ENCODE measurements at regions of chr12 and their contacts with region 1.

Region 1: GRCh38 chr12:63068857-63069442 is 82.1 kb downstream of the AVPR1A start:
- H3K4me3 ChIP-seq: no peak overlapping the region
- H3K27ac ChIP-seq: no peak overlapping the region
- H3K4me1 ChIP-seq: no peaks in the 10 kb centered on the region
- CTCF ChIP-seq: peak; percentile 38; the same call in 1 of the 2 replicates

Region 2: GRCh38 chr12:62435303-62436163 is 633.4 kb before region 1 on chr12:
- CTCF ChIA-PET with region 1: interaction called, 26 read pairs
- POLR2A ChIA-PET with region 1: no interaction called
- H3K4me3 ChIP-seq: peak overlapping the region; percentile 27
- H3K27ac ChIP-seq: no peak overlapping the region
- H3K4me1 ChIP-seq: no peaks in the 10 kb centered on the region
- CTCF ChIP-seq: peak; percentile 83; the same call in 1 of the 2 replicates

Region 3: DNA sequence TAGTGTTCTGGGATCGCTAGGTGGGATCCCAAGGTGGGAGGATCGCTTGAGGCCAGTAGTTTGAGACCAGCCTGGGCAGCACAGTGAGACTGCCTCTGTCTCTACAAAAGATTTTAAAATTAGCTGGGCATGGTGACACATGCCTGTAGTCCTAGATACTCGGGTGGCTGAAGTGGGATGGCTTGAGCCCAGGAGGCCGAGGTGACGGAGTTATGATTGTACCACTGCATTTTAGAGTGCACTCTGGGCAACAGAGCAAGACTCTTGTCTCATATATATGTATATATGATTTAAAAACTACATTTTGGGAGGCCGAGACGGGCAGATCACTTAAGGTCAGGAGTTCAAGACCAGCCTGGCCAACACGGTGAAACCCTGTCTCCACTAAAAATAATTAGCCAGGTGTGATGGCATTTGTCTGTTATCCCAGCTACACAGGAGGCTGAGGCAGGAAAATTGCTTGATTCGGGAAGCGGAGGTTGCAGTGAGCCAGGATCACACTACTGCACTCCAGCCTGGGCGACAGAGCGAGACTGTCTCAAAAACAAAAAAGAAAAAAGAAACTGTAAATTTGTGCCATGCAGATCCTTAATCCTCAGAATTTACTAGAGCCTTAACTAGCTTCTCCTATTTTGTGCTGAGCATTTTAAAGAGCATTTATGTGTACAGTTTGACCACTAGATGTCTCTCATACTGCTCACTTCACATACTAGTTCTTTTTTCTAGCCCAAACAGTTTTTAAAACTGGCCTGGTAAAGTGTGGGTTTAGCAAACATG is 487.5 kb before region 1 on chr12:
- CTCF ChIA-PET with region 1: interaction called, 12 read pairs
- POLR2A ChIA-PET with region 1: no interaction called
- H3K4me3 ChIP-seq: no peak overlapping the region
- H3K27ac ChIP-seq: no peak overlapping the region
- H3K4me1 ChIP-seq: no peaks in the 10 kb centered on the region
- CTCF ChIP-seq: no peak

Region 4: GRCh38 chr12:62799126-62799736 is 269.7 kb before region 1 on chr12:
- CTCF ChIA-PET with region 1: interaction called, 18 read pairs
- POLR2A ChIA-PET with region 1: no interaction called
- H3K4me3 ChIP-seq: no peak overlapping the region
- H3K27ac ChIP-seq: no peak overlapping the region
- H3K4me1 ChIP-seq: peaks cover 3% of the 10 kb centered on the region; the same call in 1 of the 2 replicates
- CTCF ChIP-seq: peak; percentile 35; the same call in 1 of the 2 replicates

Region 5: GRCh38 chr12:62813031-62813829 is 255.7 kb before region 1 on chr12:
- CTCF ChIA-PET with region 1: interaction called, 20 read pairs
- POLR2A ChIA-PET with region 1: no interaction called
- H3K4me3 ChIP-seq: no peak overlapping the region
- H3K27ac ChIP-seq: no peak overlapping the region
- H3K4me1 ChIP-seq: peaks cover 6% of the 10 kb centered on the region
- CTCF ChIP-seq: peak; percentile 35; the same call in 1 of the 2 replicates

Region 6: GRCh38 chr12:62934799-62935674 is 133.9 kb before region 1 on chr12 and contains the start of gene PPM1H:
- CTCF ChIA-PET with region 1: interaction called, 32 read pairs
- POLR2A ChIA-PET with region 1: no interaction called
- H3K4me3 ChIP-seq: peak within 1 kb of the TSS; percentile 73
- H3K27ac ChIP-seq: peak within 1 kb of the TSS; percentile 68
- H3K4me1 ChIP-seq: peaks cover 20% of the 10 kb centered on the region
- CTCF ChIP-seq: peak; percentile 99

Region 7: GRCh38 chr12:62995097-62995496 is 73.9 kb before region 1 on chr12:
- CTCF ChIA-PET with region 1: no interaction called
- POLR2A ChIA-PET with region 1: no interaction called
- H3K4me3 ChIP-seq: no peak overlapping the region
- H3K27ac ChIP-seq: no peak overlapping the region
- H3K4me1 ChIP-seq: no peaks in the 10 kb centered on the region
- CTCF ChIP-seq: no peak

Region 8: DNA sequence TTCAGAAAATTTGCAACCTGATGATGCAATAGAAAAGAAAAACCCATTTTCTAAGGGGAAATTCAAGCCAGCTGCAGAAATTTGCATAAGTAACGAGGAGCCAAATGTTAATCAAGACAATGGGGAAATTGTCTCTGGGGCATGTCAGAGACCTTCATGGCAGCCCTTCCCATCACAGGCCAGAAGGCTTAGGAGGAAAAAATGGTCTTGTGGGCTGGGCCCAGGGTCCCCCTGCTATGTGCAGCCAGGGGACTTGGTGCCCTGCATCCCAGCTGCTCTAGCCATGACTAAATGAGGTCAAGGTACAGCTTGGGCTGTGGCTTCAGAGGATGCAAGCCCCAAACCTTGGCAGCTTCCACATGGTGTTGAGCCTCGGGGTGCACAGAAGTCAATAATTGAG is 110.3 kb after region 1 on chr12:
- CTCF ChIA-PET with region 1: no interaction called
- POLR2A ChIA-PET with region 1: no interaction called
- H3K4me3 ChIP-seq: no peak overlapping the region
- H3K27ac ChIP-seq: no peak overlapping the region
- H3K4me1 ChIP-seq: no peaks in the 10 kb centered on the region
- CTCF ChIP-seq: no peak